Activated CD8-positive, alpha-beta T cell treated with anti-CD3 and anti-CD28 coated beads, Interleukin-2, amount 10 ng/mL, durations not matched to agents 7 days and 5 days (primary cell): ENCODE measurements at regions of chr3 and their contacts with region 1.

Region 1: DNA sequence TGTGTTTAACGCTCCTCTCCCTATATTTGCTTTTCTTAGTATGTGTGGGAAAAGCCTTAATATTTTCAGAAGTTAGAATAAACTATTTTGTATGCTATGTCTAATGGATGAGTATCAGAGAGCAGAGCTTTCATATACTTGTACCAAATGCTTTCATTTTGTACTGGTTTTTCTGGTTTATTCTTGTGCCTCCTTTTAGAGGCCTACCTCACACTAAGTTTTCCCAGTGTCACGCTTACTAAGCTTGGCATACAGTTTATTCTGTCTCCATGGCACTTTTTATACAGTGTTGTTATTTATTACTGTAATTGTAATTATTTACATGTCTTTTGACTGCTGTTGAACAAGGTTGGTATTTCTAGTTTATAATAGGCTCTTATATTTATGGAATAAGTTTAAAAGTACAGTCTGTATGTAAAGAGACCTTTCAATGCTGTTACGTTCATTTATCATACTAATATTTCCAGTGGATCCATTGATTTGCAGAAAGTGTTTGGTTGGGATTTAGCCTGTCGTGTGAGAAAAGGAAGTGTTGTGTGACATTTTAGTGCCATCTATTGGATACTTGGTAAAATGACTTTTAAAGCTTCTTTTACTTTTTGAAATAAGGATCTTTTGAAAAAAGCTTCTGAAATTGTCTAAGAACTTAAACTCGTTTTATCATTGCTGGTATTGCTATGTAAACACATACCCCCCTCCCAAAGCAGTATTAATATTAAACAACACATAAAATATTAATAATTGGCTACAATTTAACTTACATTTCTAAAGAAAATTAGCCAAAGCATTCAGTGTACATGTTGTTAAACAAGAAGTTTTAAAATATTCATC is 5.2 kb upstream of the EBLN2 start:
- DNase-seq: no peak
- ATAC-seq: no peak
- H3K4me3 Mint-ChIP-seq: no peak overlapping the region
- H3K27ac Mint-ChIP-seq: no peak overlapping the region
- H3K4me1 Mint-ChIP-seq: peaks cover 8% of the 10 kb centered on the region
- H3K27me3 Mint-ChIP-seq: no peaks in the 10 kb centered on the region

Region 2: GRCh38 chr3:72847751-72848702 is 208.2 kb before region 1 on chr3 and contains the start of gene SHQ1:
- CTCF ChIA-PET with region 1: interaction called, 43 read pairs
- POLR2A ChIA-PET with region 1: no interaction called
- DNase-seq: peak; percentile 97
- ATAC-seq: peak; percentile 95
- H3K4me3 Mint-ChIP-seq: peak within 1 kb of the TSS; percentile 94
- H3K27ac Mint-ChIP-seq: peak within 1 kb of the TSS; percentile 84
- H3K4me1 Mint-ChIP-seq: peaks cover 49% of the 10 kb centered on the region
- H3K27me3 Mint-ChIP-seq: no peaks in the 10 kb centered on the region
- total RNA-seq, gene SHQ1: 27.2 to 28.0 TPM

Region 3: GRCh38 chr3:72947715-72948490 is 108.3 kb before region 1 on chr3:
- CTCF ChIA-PET with region 1: interaction called, 75 read pairs
- POLR2A ChIA-PET with region 1: no interaction called
- DNase-seq: no peak
- ATAC-seq: no peak
- H3K4me3 Mint-ChIP-seq: no peak overlapping the region
- H3K27ac Mint-ChIP-seq: no peak overlapping the region
- H3K4me1 Mint-ChIP-seq: peaks cover 27% of the 10 kb centered on the region
- H3K27me3 Mint-ChIP-seq: no peaks in the 10 kb centered on the region

Region 4: DNA sequence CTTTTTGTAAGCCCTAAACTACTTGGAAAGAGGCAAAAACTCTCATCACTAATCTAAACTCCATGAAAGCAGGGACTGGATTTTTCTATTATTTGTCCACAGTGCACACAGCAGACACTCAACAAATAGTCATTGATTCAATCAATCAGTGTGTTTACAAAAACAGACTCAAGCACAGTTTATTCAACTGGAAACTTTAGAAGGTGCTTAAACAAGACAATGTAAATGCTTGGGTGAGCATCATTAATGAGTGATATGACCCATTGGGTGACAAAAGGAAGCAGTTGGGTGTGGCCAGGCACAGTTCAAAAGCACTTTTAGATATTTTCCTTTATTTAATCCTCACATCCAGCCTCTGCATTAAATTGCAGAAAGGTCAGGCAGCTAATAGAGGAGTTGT is 91.6 kb before region 1 on chr3:
- CTCF ChIA-PET with region 1: interaction called, 14 read pairs
- POLR2A ChIA-PET with region 1: no interaction called
- DNase-seq: no peak
- ATAC-seq: no peak
- H3K4me3 Mint-ChIP-seq: no peak overlapping the region
- H3K27ac Mint-ChIP-seq: no peak overlapping the region
- H3K4me1 Mint-ChIP-seq: peaks cover 34% of the 10 kb centered on the region
- H3K27me3 Mint-ChIP-seq: no peaks in the 10 kb centered on the region

Region 5: DNA sequence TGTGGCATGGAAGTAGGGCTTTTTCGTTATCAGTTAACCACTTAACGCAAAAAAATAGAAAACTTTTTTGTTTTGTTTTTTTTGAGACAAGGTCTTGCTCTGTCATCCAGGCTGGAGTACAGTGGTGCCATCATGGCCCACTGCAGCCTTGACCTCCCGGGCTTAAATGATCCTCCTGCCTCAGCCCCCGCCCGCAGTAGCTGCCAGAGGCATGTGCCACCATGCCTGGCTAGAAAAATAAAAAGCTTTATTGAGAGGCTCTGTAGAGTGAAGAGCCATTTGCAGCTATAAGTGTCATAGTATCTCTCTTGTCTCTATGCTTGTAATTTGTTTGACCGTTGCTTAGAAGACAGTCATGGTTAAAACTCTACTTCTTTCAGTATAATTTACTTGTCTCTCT is 46.1 kb before region 1 on chr3:
- CTCF ChIA-PET with region 1: interaction called, 12 read pairs
- POLR2A ChIA-PET with region 1: no interaction called
- DNase-seq: no peak
- ATAC-seq: no peak
- H3K4me3 Mint-ChIP-seq: no peak overlapping the region
- H3K27ac Mint-ChIP-seq: no peak overlapping the region
- H3K4me1 Mint-ChIP-seq: peaks cover 46% of the 10 kb centered on the region
- H3K27me3 Mint-ChIP-seq: no peaks in the 10 kb centered on the region

Region 6: DNA sequence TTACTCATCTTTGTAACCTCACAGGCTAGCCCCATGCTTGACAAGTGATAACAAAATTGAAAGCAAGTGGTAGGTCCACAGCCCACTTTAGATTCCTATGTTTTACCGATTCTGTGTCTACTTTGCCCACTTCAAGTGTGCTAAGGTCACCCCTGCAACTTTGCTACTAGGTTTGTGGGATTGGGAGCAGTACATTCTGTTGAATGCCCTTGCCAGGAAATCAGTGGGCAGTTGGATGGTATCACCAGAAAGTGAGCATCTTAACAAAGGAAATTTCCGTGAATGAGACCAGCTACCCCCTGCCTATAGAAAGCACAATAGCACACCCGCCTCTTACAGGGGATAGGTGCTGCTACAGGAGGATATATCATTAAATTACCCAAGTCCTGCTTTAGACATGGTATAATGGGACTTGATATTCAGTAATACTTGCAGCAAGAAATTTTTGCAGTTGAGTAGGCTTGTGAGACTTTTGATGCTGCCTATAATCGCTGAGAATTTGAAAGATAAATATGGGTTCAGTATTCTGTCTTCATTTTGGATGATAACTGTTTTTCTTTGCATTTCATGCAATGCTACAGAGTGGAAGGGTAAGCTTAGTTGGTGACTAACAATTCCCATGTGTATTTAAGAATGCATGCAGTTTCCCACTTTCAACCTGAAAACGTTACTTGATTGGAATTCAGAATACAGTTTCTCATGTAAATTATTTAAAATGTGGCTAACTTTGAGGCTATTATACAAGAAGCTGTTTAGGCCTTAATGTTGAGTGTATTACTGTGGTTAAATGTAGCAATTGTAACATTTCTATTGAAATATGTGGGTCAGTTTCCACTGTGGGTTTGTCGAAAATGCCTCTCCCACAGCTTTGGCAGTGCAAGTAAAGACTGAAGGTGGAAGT is 14.7 kb after region 1 on chr3:
- CTCF ChIA-PET with region 1: interaction called, 10 read pairs
- POLR2A ChIA-PET with region 1: no interaction called
- DNase-seq: no peak
- ATAC-seq: no peak
- H3K4me3 Mint-ChIP-seq: no peak overlapping the region
- H3K27ac Mint-ChIP-seq: no peak overlapping the region
- H3K4me1 Mint-ChIP-seq: peaks cover 39% of the 10 kb centered on the region
- H3K27me3 Mint-ChIP-seq: no peaks in the 10 kb centered on the region